Breast epithelium (tissue), 4 donors: ENCODE measurements at regions of chr3 and their contacts with region 1.

Region 1: DNA sequence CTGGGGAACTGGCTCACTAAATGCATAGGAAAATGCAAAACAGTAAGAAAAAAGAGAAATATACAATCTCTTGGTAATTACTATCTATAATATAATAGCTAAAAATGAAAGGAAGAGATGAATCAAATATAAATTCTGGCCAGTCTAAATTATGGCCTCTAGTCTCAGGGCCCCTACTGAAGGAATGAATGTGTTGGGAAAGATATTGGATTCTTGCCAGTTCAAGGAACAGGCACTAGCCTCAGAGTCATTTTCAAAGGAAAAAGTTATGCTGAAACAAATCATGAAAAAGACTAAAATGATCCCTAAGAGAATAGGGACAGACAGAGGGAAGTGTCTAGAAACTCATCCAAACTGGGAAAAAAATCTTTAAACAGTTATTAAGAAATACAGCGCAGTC is 62.4 kb downstream of the C3orf80 start:
- DNase-seq: no peak
- H3K4me3 ChIP-seq: no peak overlapping the region
- H3K27ac ChIP-seq: no peak overlapping the region
- H3K4me1 ChIP-seq: no peaks in the 10 kb centered on the region
- H3K27me3 ChIP-seq: no peaks in the 10 kb centered on the region
- CTCF ChIP-seq: no peak
- POLR2A ChIP-seq: no peak

Region 2: GRCh38 chr3:160343132-160343531 is 55.5 kb after region 1 on chr3:
- intact Hi-C with region 1: loop called (anchors 2 kb)
- DNase-seq: no peak
- H3K4me3 ChIP-seq: no peak overlapping the region
- H3K27ac ChIP-seq: no peak overlapping the region
- H3K4me1 ChIP-seq: no peaks in the 10 kb centered on the region
- H3K27me3 ChIP-seq: no peaks in the 10 kb centered on the region
- CTCF ChIP-seq: peak in 1 of 3 donors; percentile 28
- POLR2A ChIP-seq: no peak